Right cardiac atrium (tissue), 5 donors: ENCODE measurements at regions of chr7 and their contacts with region 1.

Region 1: GRCh38 chr7:47968847-47969774 is 10.3 kb downstream of the HUS1 start:
- DNase-seq: peak; percentile 62 to 78 (median 77)
- ATAC-seq: peak; percentile 59 to 73
- H3K4me3 ChIP-seq: no peak overlapping the region
- H3K27ac ChIP-seq: no peak overlapping the region
- H3K4me1 ChIP-seq: peaks cover 2% of the 10 kb centered on the region
- H3K27me3 ChIP-seq: no peaks in the 10 kb centered on the region

Region 2: DNA sequence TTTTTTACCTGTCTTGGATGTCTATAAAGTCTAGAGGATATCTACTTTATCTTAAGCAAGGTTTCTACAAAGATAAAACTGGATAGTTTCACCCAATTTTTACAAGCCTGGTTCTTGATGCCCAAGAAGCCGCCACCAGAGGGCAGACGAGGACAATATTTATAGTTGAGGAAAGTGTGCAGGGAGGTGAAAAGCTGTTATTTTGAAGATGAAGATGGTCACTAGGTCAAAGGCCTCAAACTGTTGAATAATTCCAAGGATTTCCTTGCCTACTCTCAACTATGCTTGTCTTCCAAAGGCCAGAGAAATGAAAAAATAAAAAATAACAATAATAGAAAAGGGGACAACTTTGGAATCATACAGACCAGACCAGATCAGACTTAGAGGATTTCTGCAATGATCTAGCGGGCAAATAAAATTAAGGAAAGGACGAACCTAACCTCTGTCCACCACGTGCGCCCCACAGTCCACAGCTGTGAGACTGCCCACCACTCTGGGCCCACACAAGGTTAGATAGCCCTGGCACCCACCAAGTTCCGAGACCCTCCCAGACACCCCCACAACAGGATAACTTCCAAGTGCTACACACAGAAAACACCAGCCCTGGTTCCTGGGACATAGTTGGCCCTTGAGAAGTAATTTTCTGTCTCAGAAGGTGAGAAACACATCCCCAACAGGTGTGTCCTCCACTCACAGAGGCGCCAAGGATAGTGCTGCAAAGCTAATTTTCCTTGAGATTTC is 23.7 kb before region 1 on chr7:
- intact Hi-C with region 1: loop called in 1 of 4 experiments (anchors 2 kb)
- DNase-seq: peak; percentile 81 to 94 (median 84)
- ATAC-seq: no peak
- H3K4me3 ChIP-seq: no peak overlapping the region
- H3K27ac ChIP-seq: no peak overlapping the region
- H3K4me1 ChIP-seq: peaks cover 8% of the 10 kb centered on the region
- H3K27me3 ChIP-seq: no peaks in the 10 kb centered on the region